Activated T-helper 1 cell treated with anti-CD3 and anti-CD28 coated beads, Interleukin-12 subunit alpha, Interleukin-12 subunit beta, Interleukin-2, Interleukin-4 antibody, amounts not matched to agents 30 ng/mL and 10 ng/mL and 1 ng/mL, durations not matched to agents 14 hours and 24 hours and 36 hours (primary cell): ENCODE measurements at regions of chr6 and their contacts with region 1.

Region 1: GRCh38 chr6:135535989-135536414 is 38.5 kb upstream of the AHI1 start:
- DNase-seq: peak; percentile 15
- H3K4me3 Mint-ChIP-seq: peak overlapping the region; percentile 55
- H3K27ac Mint-ChIP-seq: peak overlapping the region; percentile 77
- H3K4me1 Mint-ChIP-seq: peaks cover 53% of the 10 kb centered on the region
- H3K27me3 Mint-ChIP-seq: no peaks in the 10 kb centered on the region

Region 2: DNA sequence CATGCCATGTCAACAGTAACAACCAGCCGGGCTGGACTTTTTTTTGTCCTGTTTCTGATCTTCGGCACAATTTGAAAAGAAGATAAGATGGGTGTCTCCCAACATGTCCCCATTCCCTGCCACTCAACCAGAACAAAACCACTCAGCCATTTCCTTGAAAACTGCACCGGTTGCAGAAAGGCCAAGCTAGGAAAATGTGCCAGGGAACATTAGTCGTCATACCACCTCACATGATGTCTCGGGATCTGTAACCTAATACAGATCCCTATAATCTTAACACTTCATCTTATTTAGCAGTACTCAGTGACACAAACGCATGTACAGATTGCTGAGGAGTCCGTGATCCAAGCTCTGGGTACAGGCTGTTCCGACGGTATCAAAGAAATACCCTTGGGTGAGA is 632.6 kb before region 1 on chr6:
- intact Hi-C with region 1: no loop called
- DNase-seq: no peak
- H3K4me3 Mint-ChIP-seq: no peak overlapping the region
- H3K27ac Mint-ChIP-seq: no peak overlapping the region
- H3K4me1 Mint-ChIP-seq: no peaks in the 10 kb centered on the region
- H3K27me3 Mint-ChIP-seq: peaks cover 6% of the 10 kb centered on the region

Region 3: DNA sequence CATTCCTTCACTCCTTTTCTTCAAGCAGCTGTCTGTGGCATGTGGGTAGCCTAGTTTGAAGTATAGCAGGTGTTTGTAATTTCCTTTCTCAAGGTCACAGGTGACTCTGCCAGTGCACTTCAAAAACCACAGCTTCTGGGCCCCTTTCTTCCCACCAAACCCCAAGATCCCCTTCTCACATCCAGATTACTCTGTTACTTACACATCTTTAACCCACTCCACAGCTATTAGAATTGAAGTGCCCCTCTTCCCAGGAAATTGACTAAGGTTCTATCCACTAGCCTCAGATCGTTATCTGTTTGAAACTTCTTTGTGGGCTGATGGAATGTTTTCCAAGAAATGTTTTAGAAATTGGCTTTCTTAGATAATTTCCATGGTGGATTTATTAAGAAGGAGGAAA is 189.3 kb before region 1 on chr6:
- intact Hi-C with region 1: no loop called
- DNase-seq: no peak
- H3K4me3 Mint-ChIP-seq: no peak overlapping the region
- H3K27ac Mint-ChIP-seq: no peak overlapping the region
- H3K4me1 Mint-ChIP-seq: peaks cover 6% of the 10 kb centered on the region
- H3K27me3 Mint-ChIP-seq: peaks cover 2% of the 10 kb centered on the region

Region 4: GRCh38 chr6:135451693-135452092 is 84.3 kb before region 1 on chr6:
- intact Hi-C with region 1: loop called (anchors 2 kb)
- DNase-seq: no peak
- H3K4me3 Mint-ChIP-seq: no peak overlapping the region
- H3K27ac Mint-ChIP-seq: no peak overlapping the region
- H3K4me1 Mint-ChIP-seq: peaks cover 5% of the 10 kb centered on the region
- H3K27me3 Mint-ChIP-seq: no peaks in the 10 kb centered on the region

Region 5: DNA sequence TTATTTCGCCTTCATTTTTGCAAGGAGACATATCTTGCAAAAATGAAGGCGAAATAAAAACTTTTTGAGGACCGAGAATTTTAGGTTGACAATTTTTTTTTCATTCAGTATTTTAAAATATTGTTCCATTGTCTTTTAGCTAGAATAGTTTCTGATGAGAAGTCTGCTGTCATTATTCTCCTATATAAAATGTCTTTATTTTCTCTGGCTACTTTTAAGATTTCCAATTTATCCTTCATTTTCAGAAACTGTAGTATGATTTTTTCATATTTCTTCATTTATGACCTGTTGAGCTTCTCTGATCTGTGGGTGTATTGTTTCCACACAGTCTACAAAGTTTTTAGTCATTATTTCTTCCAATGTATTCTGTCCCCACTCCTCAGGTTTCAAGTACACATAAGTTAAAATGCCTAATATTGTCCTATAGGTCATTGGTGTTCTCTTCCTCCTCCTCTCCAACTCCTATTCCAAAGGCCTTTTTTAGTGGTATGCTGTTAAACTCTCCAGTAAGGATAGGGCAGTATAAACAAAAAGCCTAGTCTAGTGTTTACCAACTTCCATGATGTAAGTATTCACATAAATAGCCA is 54.1 kb before region 1 on chr6:
- intact Hi-C with region 1: no loop called
- DNase-seq: no peak
- H3K4me3 Mint-ChIP-seq: no peak overlapping the region
- H3K27ac Mint-ChIP-seq: peak overlapping the region; percentile 4
- H3K4me1 Mint-ChIP-seq: no peaks in the 10 kb centered on the region
- H3K27me3 Mint-ChIP-seq: no peaks in the 10 kb centered on the region

Region 6: GRCh38 chr6:135568366-135568765 is 32.4 kb after region 1 on chr6:
- intact Hi-C with region 1: loop called (anchors 2 kb)
- DNase-seq: peak; percentile 51
- H3K4me3 Mint-ChIP-seq: peak overlapping the region; percentile 3
- H3K27ac Mint-ChIP-seq: peak overlapping the region; percentile 93
- H3K4me1 Mint-ChIP-seq: peaks cover 64% of the 10 kb centered on the region
- H3K27me3 Mint-ChIP-seq: no peaks in the 10 kb centered on the region

Region 7: DNA sequence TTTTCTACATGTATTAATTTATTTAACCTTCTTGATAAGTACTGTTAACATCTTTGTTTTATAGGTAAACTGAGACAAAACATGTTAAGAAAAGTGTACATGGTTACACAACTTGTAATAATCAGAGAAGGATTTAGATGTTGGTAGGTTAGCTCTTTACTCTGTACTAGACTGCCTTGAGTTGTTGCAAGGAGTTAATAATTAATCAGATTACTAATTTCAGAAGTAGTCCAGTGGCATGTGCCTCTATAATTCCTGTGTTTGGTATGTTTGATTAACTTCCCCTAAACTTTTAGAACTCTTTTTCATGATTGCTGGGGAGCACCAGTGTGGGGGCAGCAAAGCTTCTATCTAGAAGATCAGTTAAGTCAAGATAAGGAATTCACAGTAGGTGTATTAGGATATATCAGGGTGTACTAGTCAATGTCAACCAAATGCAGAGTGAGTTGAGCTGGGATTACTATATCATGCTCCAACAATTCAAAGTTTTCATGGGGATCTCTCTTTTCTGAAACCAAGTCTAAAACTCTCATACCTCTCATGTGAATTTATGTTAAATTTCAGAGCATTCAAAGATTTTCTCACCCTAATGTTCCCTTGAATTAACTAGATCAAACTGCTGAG is 91.2 kb after region 1 on chr6:
- intact Hi-C with region 1: loop called (anchors 1 kb)
- DNase-seq: no peak
- H3K4me3 Mint-ChIP-seq: no peak overlapping the region
- H3K27ac Mint-ChIP-seq: peak overlapping the region; percentile 68
- H3K4me1 Mint-ChIP-seq: peaks cover 80% of the 10 kb centered on the region
- H3K27me3 Mint-ChIP-seq: no peaks in the 10 kb centered on the region

Region 8: DNA sequence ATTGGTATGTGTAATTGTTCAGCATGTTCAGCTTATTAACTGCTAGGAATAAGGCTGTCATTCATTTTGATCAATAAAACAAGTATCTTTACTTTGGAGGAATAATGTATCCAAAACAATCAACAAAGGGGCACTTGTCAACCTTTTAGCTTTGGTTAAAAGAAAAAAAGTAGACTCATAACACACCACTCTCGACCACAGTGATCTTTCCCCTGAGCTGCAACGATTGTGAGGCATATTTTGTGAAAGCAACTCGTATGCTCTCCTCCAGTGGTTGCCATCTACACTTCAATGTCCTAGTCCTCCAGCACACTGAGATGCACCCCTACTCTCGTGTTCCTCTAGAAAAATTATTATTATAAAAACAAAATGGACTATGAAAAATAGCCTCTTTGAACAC is 255.4 kb after region 1 on chr6:
- intact Hi-C with region 1: loop called (anchors 1 kb)
- DNase-seq: no peak
- H3K4me3 Mint-ChIP-seq: no peak overlapping the region
- H3K27ac Mint-ChIP-seq: no peak overlapping the region
- H3K4me1 Mint-ChIP-seq: peaks cover 6% of the 10 kb centered on the region
- H3K27me3 Mint-ChIP-seq: peaks cover 13% of the 10 kb centered on the region

Region 9: DNA sequence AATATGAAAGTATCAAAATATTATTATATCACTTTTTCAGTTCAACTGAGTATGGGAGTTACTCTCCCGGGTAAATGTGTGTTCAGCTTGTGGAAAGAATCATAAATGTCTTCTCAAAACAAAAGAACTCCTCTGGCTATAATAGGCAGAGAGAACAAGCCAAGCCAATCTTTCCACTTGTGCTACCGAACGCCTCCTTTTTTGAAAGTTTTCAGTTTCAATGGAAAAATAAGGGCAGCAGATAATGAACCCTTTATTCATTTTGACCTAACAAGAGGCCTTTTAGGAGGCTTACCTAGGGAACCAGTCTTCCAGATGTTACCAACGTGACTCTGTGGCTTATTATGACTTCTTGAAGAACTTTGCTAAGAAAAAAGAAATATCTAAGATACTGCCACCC is 383.0 kb after region 1 on chr6:
- intact Hi-C with region 1: loop called (anchors 1 kb)
- DNase-seq: no peak
- H3K4me3 Mint-ChIP-seq: no peak overlapping the region
- H3K27ac Mint-ChIP-seq: peak overlapping the region; percentile 4
- H3K4me1 Mint-ChIP-seq: peaks cover 44% of the 10 kb centered on the region
- H3K27me3 Mint-ChIP-seq: no peaks in the 10 kb centered on the region